ENCODE measurements at regions of chr12 and their contacts with region 1.

Region 1: DNA sequence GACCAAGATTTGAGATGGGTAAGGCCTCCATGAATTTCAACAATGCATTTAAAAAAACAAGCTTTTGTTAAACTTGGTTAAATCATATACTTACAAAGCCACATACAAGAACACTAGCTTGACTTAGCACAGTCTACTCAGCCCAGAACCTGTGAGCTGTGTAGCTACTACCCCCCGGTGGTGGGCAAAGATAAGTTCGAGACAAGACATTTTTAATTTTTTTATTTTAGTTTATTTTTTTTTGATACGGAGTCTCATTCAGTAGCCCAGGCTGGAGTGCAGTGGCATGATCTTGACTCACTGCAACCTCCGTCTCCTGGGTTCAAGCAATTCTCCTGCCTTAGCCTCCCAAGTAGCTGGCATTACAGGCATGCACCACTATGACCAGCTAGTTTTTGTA is 3.7 kb upstream of the NECAP1 start:
- DNase-seq: peak; percentile 64
- H3K4me3 ChIP-seq: no peak overlapping the region
- H3K27ac ChIP-seq: no peak overlapping the region
- H3K4me1 ChIP-seq: peaks cover 3 to 16% of the 10 kb centered on the region in 2 experiments; a peak in 3 of 4 replicates
- H3K27me3 ChIP-seq: no peaks in the 10 kb centered on the region
- CTCF ChIP-seq: peak; percentile 71
- EP300 ChIP-seq: no peak
- RAD21 ChIP-seq: peak; percentile 84

Region 2: DNA sequence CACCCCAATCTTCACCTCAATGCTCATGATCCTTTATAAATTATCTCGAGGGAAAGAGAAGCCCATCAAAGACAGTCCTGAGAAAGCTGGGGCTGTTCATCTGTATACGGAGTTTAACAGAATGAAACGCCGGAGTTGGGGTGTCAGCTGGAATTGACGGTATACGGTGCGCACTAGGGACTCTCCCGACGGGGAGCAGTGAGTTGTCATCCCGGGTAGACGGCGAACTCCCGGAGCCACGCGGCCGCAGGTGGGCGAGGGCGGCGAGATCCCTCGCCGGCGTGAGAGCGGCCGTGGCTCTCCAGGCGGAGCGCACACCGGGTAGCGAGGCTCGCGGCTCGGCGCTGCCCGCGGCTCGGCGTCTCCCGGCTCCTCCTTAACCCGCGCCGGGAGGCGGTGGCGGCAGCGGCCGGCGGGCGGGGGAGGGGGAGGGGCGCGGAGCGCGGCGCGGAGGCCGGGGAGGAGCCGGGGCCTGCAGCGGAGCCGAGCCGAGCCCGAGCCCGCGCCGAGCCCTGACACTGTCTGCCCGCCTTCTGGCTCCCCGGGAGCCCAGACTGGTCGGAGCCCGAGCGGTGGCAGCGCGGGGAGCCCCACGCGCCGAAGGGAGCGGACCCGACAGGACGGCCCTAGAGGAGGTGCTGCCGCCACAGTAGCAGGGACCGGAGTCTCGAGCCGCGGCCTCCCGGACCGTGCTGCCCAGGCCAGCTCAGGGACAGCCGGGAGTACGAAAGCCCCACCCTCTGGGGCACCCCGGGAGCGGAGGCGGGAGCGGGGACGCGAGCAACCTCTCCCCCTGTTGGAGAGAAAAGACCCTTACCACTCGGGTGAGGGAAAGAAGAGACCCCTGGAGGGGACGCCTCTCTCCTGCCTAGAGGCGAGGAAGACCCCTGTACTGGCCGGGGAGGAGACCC is 45.9 kb before region 1 on chr12 and contains the start of gene FOXJ2:
- CTCF ChIA-PET with region 1: interaction called, 24 read pairs
- POLR2A ChIA-PET with region 1: no interaction called
- DNase-seq: peak; percentile 91
- H3K4me3 ChIP-seq: peak within 1 kb of the TSS; percentile 85 to 89
- H3K27ac ChIP-seq: peak within 1 kb of the TSS; percentile 53 to 63; a peak in 2 of 4 replicates
- H3K4me1 ChIP-seq: peaks cover 21 to 25% of the 10 kb centered on the region in 2 experiments; a peak in 3 of 4 replicates
- H3K27me3 ChIP-seq: no peaks in the 10 kb centered on the region
- CTCF ChIP-seq: peak; percentile 20
- EP300 ChIP-seq: peak in 1 of 2 experiments; percentile 30; a peak in 1 of 4 replicates
- RAD21 ChIP-seq: no peak
- polyA plus RNA-seq, gene FOXJ2: 3.0 and 3.4 TPM in 2 replicates

Region 3: DNA sequence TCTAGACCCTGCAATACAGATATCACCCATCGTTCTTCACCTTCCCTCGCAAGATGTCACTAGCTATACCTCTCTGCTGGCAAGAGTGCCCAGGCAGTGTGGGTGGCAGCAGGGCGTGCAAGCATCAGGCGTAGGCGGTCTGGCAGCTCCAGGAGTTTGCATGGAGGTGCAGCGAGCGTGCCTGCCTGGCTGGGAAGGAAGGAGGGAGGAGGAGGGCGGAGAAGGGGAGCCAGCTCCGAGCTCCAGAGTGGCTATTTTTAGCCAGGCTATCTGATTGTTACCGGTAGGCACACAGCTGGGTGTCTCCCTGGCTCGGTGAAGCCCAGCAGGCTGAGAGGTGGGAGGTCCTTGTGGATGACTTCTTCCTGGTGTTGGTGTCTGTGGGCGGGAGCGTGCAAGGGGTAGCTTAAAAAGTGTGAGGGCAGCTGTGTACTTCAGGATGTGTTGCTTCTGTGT is 39.7 kb before region 1 on chr12:
- CTCF ChIA-PET with region 1: interaction called, 89 read pairs
- POLR2A ChIA-PET with region 1: no interaction called
- DNase-seq: peak; percentile 72
- H3K4me3 ChIP-seq: peak overlapping the region; percentile 30 to 43
- H3K27ac ChIP-seq: peak overlapping the region; percentile 33 to 54; a peak in 2 of 4 replicates
- H3K4me1 ChIP-seq: peaks cover 30 to 32% of the 10 kb centered on the region in 2 experiments
- H3K27me3 ChIP-seq: no peaks in the 10 kb centered on the region
- CTCF ChIP-seq: no peak
- EP300 ChIP-seq: no peak
- RAD21 ChIP-seq: no peak

Measured in SK-N-SH (cell line).